H1 (cell line): ENCODE measurements at regions of chr1 and their contacts with region 1.

Region 1: DNA sequence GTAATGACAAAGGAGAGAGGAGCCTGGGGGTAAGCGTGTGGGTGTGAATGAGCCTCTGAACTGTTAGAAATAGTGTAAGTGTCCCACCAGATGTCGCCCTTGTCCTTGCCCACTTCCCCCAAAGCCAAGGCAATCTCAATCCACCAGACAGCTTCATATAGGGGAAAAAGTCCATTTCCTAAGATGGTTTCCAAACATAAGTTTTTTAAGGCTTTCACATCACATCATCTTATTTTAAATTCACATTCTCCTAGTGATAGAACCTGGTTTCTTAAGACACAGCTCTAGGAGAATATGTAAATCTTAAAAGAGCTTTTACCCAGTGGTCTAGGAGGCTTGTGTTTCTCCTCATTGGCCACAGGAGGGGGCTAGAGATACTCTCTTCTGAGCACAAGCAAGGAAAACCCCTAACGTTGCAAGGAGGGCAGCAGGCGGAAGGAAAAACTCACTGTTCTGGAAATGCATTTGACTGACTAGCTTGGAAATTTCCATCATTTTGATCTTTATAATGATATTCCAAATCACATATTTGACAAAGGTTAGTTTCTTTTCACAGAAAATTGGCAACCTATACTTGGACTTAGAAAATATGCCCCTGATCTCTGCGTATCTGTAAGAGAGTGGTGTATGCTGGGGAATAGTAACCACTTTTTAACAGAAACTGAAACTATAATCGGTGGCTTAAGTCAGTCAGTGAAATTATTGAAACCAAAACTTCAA is 51.9 kb upstream of the LPAR3 start:
- DNase-seq: peak in 1 of 2 experiments; percentile 61
- H3K4me3 ChIP-seq: no peak overlapping the region
- H3K27ac ChIP-seq: no peak overlapping the region
- H3K4me1 ChIP-seq: peaks cover 0 to 2% (median 0%) of the 10 kb centered on the region in 4 experiments; a peak in 3 of 7 replicates
- H3K27me3 ChIP-seq: peaks cover 0 to 2% (median 0%) of the 10 kb centered on the region in 4 experiments; a peak in 1 of 7 replicates
- CTCF ChIP-seq: peak; percentile 63 to 86 (median 71)
- EP300 ChIP-seq: no peak
- POLR2A ChIP-seq: no peak
- RAD21 ChIP-seq: peak; percentile 72 to 74

Region 2: GRCh38 chr1:84869720-84870119 is 75.2 kb before region 1 on chr1:
- CTCF ChIA-PET with region 1: no interaction called
- POLR2A ChIA-PET with region 1: no interaction called
- DNase-seq: no peak
- H3K4me3 ChIP-seq: no peak overlapping the region
- H3K27ac ChIP-seq: no peak overlapping the region
- H3K4me1 ChIP-seq: no peaks in the 10 kb centered on the region
- H3K27me3 ChIP-seq: no peaks in the 10 kb centered on the region
- CTCF ChIP-seq: no peak
- EP300 ChIP-seq: no peak
- POLR2A ChIP-seq: no peak
- RAD21 ChIP-seq: no peak

Region 3: DNA sequence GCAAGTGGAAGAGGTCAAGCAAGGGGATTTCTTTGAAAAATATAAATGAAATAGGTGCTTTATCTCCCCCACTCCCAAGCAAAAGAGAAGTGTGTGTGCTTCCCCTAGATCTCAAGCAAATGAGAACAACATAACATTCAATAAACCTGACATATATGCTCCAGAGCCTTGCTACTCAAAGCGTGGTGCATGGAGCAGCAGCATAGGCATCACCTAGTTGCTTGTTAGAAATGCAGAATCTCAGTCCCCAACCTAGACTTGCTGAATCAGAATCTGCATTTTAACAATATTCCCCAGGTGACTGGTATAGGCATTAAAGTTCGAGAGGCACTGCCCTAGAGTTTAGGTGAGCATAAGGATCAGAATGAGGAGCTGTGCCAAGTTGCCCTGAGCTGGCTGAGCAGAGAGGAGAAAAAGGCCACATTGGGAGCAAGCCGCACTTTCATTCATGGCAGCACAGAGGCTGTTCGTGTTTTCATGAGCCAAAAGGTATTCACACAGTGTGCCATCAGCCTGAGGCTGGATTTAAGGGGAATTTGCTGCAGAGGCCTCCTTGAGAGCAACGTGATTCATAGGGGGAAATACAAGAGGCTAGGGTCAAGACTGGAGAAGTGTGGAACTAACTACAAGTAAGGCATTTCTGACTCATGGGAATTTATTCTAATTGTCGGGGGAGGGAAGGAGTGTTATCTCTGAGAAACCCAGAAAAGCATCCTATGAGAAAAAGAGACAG is 37.7 kb before region 1 on chr1:
- CTCF ChIA-PET with region 1: no interaction called
- POLR2A ChIA-PET with region 1: no interaction called
- DNase-seq: peak in 1 of 2 experiments; percentile 54
- H3K4me3 ChIP-seq: no peak overlapping the region
- H3K27ac ChIP-seq: no peak overlapping the region
- H3K4me1 ChIP-seq: peaks cover 3 to 7% (median 4%) of the 10 kb centered on the region in 4 experiments; a peak in 5 of 7 replicates
- H3K27me3 ChIP-seq: no peaks in the 10 kb centered on the region
- CTCF ChIP-seq: no peak
- EP300 ChIP-seq: no peak
- POLR2A ChIP-seq: no peak
- RAD21 ChIP-seq: no peak

Region 4: GRCh38 chr1:84919461-84919970 is 25.4 kb before region 1 on chr1:
- CTCF ChIA-PET with region 1: interaction called, 22 read pairs
- POLR2A ChIA-PET with region 1: no interaction called
- DNase-seq: peak in 1 of 2 experiments; percentile 16
- H3K4me3 ChIP-seq: no peak overlapping the region
- H3K27ac ChIP-seq: no peak overlapping the region
- H3K4me1 ChIP-seq: no peaks in the 10 kb centered on the region
- H3K27me3 ChIP-seq: no peaks in the 10 kb centered on the region
- CTCF ChIP-seq: no peak
- EP300 ChIP-seq: no peak
- POLR2A ChIP-seq: no peak
- RAD21 ChIP-seq: no peak

Region 5: DNA sequence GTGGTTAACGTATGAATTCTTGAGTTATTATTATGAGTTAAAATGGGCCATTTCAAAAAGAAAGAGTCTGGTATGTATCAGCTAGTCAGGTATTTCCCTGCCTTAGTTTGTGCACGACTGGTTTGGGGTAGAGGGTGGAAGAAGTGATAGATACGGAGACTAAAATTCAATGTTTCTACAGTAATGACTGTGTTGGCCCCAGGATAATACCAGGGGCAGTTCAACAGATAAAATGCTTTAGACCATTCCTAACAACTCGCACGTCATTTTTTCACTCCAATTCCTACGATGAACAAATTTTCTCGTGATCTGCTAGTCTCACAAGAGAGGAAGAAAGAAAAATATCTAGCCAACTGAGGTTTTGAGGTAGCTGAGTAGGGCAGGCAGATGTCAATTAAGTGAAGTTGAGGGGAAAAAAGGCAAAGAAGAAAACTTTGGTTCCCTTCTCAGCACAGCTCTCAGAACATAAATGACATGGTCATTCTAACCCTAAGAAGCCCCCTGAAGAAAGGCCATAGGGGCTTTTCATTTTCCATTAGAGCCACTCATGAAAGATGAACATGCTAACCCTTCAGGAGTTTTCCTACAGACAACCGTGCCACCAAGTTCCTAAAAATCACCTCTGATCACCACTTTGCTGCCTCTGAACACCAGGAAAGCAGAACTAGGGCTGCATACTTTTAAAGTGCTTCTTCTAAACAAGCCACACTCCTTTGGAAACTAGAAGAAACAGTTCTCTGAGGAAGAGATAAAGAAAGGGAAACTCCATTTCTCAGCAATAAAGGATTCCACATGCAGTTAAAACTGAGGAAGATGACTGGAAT is 46.4 kb after region 1 on chr1:
- CTCF ChIA-PET with region 1: interaction called, 11 read pairs
- POLR2A ChIA-PET with region 1: no interaction called
- DNase-seq: no peak
- H3K4me3 ChIP-seq: no peak overlapping the region
- H3K27ac ChIP-seq: no peak overlapping the region
- H3K4me1 ChIP-seq: no peaks in the 10 kb centered on the region
- H3K27me3 ChIP-seq: peaks cover 2 to 10% (median 5%) of the 10 kb centered on the region in 4 experiments
- CTCF ChIP-seq: no peak
- EP300 ChIP-seq: no peak
- POLR2A ChIP-seq: no peak
- RAD21 ChIP-seq: no peak

Region 6: DNA sequence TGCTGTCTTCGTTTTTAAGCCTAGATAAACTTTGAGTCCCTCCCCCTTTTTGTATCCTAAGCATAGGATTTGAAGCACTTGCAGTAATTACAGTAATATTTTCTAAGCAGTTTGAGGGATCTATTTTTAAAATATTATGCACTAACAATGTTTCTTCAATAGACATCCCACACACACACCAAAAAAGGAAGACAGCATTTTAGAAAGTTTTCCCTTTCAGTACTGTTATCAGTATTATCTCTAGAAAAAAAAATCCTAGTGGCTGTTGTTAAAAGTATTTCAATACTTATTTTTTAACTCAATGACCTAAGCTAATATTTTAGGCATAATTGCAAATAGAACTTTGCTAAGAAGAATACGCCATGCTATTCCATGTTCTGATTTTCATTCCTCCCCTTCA is 88.3 kb after region 1 on chr1:
- CTCF ChIA-PET with region 1: interaction called, 122 read pairs
- POLR2A ChIA-PET with region 1: interaction called, 4 read pairs
- DNase-seq: no peak
- H3K4me3 ChIP-seq: no peak overlapping the region
- H3K27ac ChIP-seq: no peak overlapping the region
- H3K4me1 ChIP-seq: no peaks in the 10 kb centered on the region
- H3K27me3 ChIP-seq: no peaks in the 10 kb centered on the region
- CTCF ChIP-seq: no peak
- EP300 ChIP-seq: no peak
- POLR2A ChIP-seq: no peak
- RAD21 ChIP-seq: no peak

Region 7: DNA sequence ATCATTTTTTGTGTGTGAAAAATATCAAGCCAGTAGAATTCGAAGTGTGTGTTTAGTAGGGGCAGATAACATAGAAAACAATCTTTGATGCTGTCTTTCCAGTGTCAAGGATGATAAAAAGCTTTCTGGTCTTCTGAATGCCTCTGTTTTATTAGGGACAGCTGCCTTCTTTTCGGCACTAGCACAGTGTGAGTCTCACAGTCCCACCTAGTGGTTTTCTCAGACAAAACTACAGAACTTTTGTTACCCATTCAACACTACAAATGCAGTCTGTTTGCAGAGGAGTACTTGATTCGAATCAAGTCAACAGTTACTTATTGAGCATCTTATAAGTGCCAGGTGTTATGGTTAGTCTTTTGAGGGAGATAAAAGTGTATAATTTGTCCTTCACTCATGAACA is 134.0 kb after region 1 on chr1:
- CTCF ChIA-PET with region 1: interaction called, 17 read pairs
- POLR2A ChIA-PET with region 1: no interaction called
- DNase-seq: no peak
- H3K4me3 ChIP-seq: no peak overlapping the region
- H3K27ac ChIP-seq: no peak overlapping the region
- H3K4me1 ChIP-seq: no peaks in the 10 kb centered on the region
- H3K27me3 ChIP-seq: no peaks in the 10 kb centered on the region
- CTCF ChIP-seq: peak in 2 of 3 experiments; percentile 30; a peak in 3 of 4 replicates
- EP300 ChIP-seq: no peak
- POLR2A ChIP-seq: no peak
- RAD21 ChIP-seq: peak; percentile 42 to 47

Region 8: GRCh38 chr1:85240174-85240601 is 295.3 kb after region 1 on chr1:
- CTCF ChIA-PET with region 1: interaction called, 10 read pairs
- POLR2A ChIA-PET with region 1: no interaction called
- DNase-seq: no peak
- H3K4me3 ChIP-seq: no peak overlapping the region
- H3K27ac ChIP-seq: no peak overlapping the region
- H3K4me1 ChIP-seq: peaks cover 0 to 1% (median 0%) of the 10 kb centered on the region in 4 experiments; a peak in 2 of 7 replicates
- H3K27me3 ChIP-seq: no peaks in the 10 kb centered on the region
- CTCF ChIP-seq: peak in 2 of 3 experiments; percentile 48 to 64; a peak in 3 of 4 replicates
- EP300 ChIP-seq: no peak
- POLR2A ChIP-seq: no peak
- RAD21 ChIP-seq: peak; percentile 79 to 85